Naive thymus-derived CD4-positive, alpha-beta T cell (primary cell): ENCODE measurements at regions of chr2 and their contacts with region 1.

Region 1: DNA sequence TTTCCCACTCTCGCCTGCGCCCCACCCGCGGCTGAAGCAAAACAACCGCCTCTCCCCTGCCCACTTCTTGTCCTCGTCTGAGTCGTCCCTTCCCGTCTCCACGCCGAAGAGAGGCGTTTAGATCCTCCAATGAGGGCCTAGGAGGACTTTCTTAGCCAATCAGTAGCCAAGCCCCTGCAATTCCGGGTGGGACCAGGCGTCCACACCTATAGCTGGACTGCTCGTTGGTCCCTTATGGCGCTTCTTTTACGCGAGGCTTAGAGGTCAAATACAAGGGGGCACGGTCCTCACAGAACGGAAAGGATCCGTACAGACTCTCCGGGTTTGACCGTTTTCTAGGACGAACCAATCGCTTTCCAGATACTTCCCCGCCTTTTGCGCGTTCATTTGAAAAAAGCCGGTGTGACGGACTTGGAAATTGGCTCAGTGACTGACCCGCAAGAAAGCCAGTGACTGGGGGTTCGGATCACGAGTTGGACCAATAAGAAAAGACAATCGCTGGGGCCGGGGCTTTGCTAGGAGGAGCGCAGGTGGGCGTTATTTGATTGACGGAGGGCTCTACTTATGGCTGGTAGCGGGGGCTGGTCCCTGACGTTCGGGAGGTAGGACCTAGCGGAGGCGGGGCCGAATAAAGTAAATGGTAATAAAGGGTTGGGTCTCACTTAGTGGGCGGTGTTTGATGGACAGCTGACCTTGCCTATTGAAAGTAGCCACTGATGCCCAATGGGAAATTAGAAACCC is 565 bp upstream of the PPM1B start:
- DNase-seq: peak; percentile 78 to 100 (median 99)
- ATAC-seq: peak; percentile 87
- H3K4me3 ChIP-seq: peak overlapping the region; percentile 80
- H3K4me3 Mint-ChIP-seq: peak overlapping the region; percentile 92 to 100 (median 96)
- H3K27ac ChIP-seq: peak overlapping the region; percentile 96
- H3K27ac Mint-ChIP-seq: peak overlapping the region; percentile 99 to 100 (median 100)
- H3K4me1 ChIP-seq: peaks cover 16 to 28% of the 10 kb centered on the region in 2 donors
- H3K4me1 Mint-ChIP-seq: peaks cover 29 to 38% (median 35%) of the 10 kb centered on the region in 7 donors
- H3K27me3 ChIP-seq: no peaks in the 10 kb centered on the region
- H3K27me3 Mint-ChIP-seq: no peaks in the 10 kb centered on the region

Region 2: DNA sequence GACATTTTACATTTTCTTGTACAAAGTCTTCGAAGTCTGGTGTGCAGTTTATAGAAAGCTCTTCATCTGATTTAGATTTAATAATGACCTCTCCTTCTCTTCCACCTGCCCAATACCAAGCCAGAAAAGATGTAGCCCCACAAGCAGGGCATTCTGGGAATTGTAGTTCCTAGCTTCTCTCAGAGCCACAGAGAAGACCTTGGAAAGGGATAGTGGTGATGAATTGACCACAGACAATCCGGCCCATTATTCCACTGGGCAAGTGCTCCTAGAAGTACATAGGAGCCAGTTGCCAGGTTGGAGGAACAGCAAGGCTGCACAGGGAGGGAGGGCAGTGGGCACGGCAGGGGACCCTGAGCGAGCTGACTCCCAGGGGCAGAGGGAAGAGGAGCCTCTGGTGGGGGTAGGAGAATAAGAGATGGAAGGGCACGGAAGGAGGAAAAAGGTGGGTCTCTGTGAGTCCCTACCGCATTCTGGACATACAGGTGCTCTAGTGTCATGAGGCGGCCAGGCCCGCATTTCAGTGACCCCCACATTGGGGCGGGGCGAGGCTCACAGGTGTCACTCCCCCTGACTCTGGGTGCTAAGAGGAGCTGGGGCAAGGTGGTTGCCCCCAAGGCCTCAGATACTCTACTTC is 1223.2 kb before region 1 on chr2:
- CTCF ChIA-PET with region 1: no interaction called
- POLR2A ChIA-PET with region 1: no interaction called
- intact Hi-C with region 1: no loop called
- DNase-seq: no peak
- ATAC-seq: no peak
- H3K4me3 ChIP-seq: no peak overlapping the region
- H3K4me3 Mint-ChIP-seq: no peak overlapping the region
- H3K27ac ChIP-seq: no peak overlapping the region
- H3K27ac Mint-ChIP-seq: no peak overlapping the region
- H3K4me1 ChIP-seq: no peaks in the 10 kb centered on the region
- H3K4me1 Mint-ChIP-seq: peaks cover 0 to 7% (median 5%) of the 10 kb centered on the region in 7 donors
- H3K27me3 ChIP-seq: no peaks in the 10 kb centered on the region
- H3K27me3 Mint-ChIP-seq: peaks cover 0 to 8% (median 0%) of the 10 kb centered on the region in 5 donors

Region 3: DNA sequence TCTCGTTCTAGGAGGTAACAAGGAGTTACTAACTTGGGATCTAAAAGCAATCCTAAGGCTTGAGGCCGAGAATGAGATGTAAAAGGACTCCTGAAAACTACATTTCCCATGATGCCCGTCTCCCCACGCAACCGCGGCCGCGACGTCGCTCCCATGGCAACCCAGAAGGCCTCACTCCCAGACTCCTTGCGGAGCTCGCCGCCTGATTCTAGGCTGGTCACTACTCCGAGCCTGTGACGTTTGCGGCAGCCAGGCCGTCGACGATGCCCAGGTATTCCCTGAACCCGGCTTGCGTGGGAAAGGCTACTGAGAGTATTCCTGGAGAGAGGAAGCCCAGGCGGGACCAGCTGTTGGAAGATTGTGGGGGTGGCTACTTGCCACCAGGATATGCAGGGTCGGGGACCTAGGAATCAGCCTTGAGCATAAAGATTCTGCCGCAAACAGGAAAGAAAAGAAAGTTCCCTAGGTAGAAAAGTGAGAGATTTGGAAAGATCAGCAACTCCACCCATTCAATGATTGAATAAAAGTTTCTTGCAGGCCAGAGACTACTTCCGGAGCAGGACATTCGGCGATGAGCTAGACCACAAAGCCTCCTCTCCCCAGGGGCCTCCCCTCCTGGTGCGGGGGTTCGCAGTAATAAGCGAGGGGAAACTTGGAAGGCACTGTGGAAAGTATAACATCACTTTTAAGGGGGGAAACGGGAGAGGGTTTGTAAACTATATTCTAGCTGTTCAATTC is 394.1 kb before region 1 on chr2 and contains the start of gene DYNC2LI1:
- CTCF ChIA-PET with region 1: no interaction called
- POLR2A ChIA-PET with region 1: no interaction called
- intact Hi-C with region 1: loop called (anchors 5 kb)
- DNase-seq: peak; percentile 44 to 81 (median 65)
- ATAC-seq: peak; percentile 97
- H3K4me3 ChIP-seq: peak within 1 kb of the TSS; percentile 75
- H3K4me3 Mint-ChIP-seq: peak within 1 kb of the TSS; percentile 92 to 99 (median 96)
- H3K27ac ChIP-seq: peak within 1 kb of the TSS; percentile 67
- H3K27ac Mint-ChIP-seq: peak within 1 kb of the TSS; percentile 35 to 93 (median 79)
- H3K4me1 ChIP-seq: no peaks in the 10 kb centered on the region
- H3K4me1 Mint-ChIP-seq: peaks cover 10 to 21% (median 13%) of the 10 kb centered on the region in 7 donors
- H3K27me3 ChIP-seq: no peaks in the 10 kb centered on the region
- H3K27me3 Mint-ChIP-seq: peaks cover 0 to 4% (median 0%) of the 10 kb centered on the region in 5 donors
- total RNA-seq, gene DYNC2LI1: 1.9 to 6.1 (median 5.1) TPM

Region 4: GRCh38 chr2:44087036-44087713 is 80.9 kb before region 1 on chr2:
- CTCF ChIA-PET with region 1: no interaction called
- POLR2A ChIA-PET with region 1: no interaction called
- intact Hi-C with region 1: loop called (anchors 1 kb)
- DNase-seq: peak; percentile 62 to 86 (median 77)
- ATAC-seq: peak; percentile 97
- H3K4me3 ChIP-seq: peak overlapping the region; percentile 68
- H3K4me3 Mint-ChIP-seq: peak overlapping the region; percentile 60 to 92 (median 86)
- H3K27ac ChIP-seq: peak overlapping the region; percentile 77
- H3K27ac Mint-ChIP-seq: peak overlapping the region; percentile 79 to 98 (median 91)
- H3K4me1 ChIP-seq: peaks cover 0 to 9% of the 10 kb centered on the region in 2 donors
- H3K4me1 Mint-ChIP-seq: peaks cover 4 to 30% (median 15%) of the 10 kb centered on the region in 7 donors
- H3K27me3 ChIP-seq: no peaks in the 10 kb centered on the region
- H3K27me3 Mint-ChIP-seq: no peaks in the 10 kb centered on the region

Region 5: GRCh38 chr2:44233450-44234128 is 65.5 kb after region 1 on chr2:
- CTCF ChIA-PET with region 1: interaction called, 3 read pairs
- POLR2A ChIA-PET with region 1: interaction called, 7 read pairs
- intact Hi-C with region 1: loop called (anchors 1 kb)
- DNase-seq: no peak
- ATAC-seq: no peak
- H3K4me3 ChIP-seq: no peak overlapping the region
- H3K4me3 Mint-ChIP-seq: no peak overlapping the region
- H3K27ac ChIP-seq: no peak overlapping the region
- H3K27ac Mint-ChIP-seq: peak overlapping the region in 4 of 9 donors; percentile 25 to 71 (median 48)
- H3K4me1 ChIP-seq: peaks cover 16 to 17% of the 10 kb centered on the region in 2 donors
- H3K4me1 Mint-ChIP-seq: peaks cover 6 to 46% (median 36%) of the 10 kb centered on the region in 7 donors
- H3K27me3 ChIP-seq: no peaks in the 10 kb centered on the region
- H3K27me3 Mint-ChIP-seq: no peaks in the 10 kb centered on the region

Region 6: GRCh38 chr2:44324971-44325426 is 156.9 kb after region 1 on chr2:
- CTCF ChIA-PET with region 1: no interaction called
- POLR2A ChIA-PET with region 1: no interaction called
- intact Hi-C with region 1: no loop called
- DNase-seq: no peak
- ATAC-seq: no peak
- H3K4me3 ChIP-seq: no peak overlapping the region
- H3K4me3 Mint-ChIP-seq: no peak overlapping the region
- H3K27ac ChIP-seq: no peak overlapping the region
- H3K27ac Mint-ChIP-seq: peak overlapping the region in 1 of 9 donors; percentile 24
- H3K4me1 ChIP-seq: no peaks in the 10 kb centered on the region
- H3K4me1 Mint-ChIP-seq: peaks cover 0 to 2% (median 0%) of the 10 kb centered on the region in 7 donors
- H3K27me3 ChIP-seq: no peaks in the 10 kb centered on the region
- H3K27me3 Mint-ChIP-seq: no peaks in the 10 kb centered on the region

Region 7: DNA sequence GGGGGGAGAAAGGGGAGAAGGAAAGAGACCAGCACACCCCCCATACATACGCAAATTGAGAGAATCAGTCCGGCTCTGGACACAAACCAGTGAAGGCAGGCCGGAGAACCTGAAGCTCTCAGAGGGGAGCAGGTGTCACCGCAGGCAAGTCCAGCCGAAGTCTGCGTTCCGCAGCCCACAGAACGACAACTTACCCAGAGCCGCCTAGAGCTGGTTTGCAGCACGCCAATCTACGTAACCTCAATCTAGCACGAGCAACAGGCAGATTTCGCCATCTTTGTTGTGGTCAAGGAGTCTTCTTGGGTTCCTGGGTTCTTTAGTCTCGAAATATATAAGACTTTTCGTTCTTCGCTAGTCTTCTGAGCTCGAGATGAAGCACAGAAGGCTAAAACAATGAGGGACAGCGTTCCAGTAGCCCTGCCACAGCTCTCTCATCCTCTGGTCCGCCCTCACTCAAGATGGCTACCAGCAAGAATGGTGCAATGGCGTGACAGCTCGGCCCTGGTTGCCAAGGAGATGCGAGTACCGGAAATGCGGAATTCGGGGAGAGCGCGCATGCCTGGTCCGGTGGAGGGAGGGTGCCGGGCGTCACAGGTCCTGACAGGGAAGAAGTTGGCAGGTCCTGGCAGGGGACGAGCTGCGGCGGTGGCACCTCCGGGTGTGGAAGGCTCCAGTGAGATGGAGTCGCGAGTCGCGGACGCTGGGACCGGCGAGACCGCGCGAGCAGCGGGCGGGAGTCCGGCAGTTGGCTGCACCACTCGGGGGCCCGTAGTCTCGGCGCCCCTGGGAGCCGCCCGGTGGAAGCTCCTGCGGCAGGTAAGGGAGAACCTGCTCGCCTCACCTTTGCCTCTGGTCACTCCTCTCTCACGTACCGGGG is 193.5 kb after region 1 on chr2 and contains the starts of genes CAMKMT and PREPL:
- CTCF ChIA-PET with region 1: no interaction called
- POLR2A ChIA-PET with region 1: interaction called, 55 read pairs
- intact Hi-C with region 1: loop called (anchors 1 kb)
- DNase-seq: peak; percentile 95 to 99 (median 99)
- ATAC-seq: peak; percentile 93
- H3K4me3 ChIP-seq: peak within 1 kb of the TSS; percentile 88
- H3K4me3 Mint-ChIP-seq: peak within 1 kb of the TSS; percentile 92 to 100 (median 98)
- H3K27ac ChIP-seq: peak within 1 kb of the TSS; percentile 99
- H3K27ac Mint-ChIP-seq: peak within 1 kb of the TSS; percentile 96 to 100 (median 99)
- H3K4me1 ChIP-seq: peaks cover 16 to 17% of the 10 kb centered on the region in 2 donors
- H3K4me1 Mint-ChIP-seq: peaks cover 22 to 81% (median 61%) of the 10 kb centered on the region in 7 donors
- H3K27me3 ChIP-seq: no peaks in the 10 kb centered on the region
- H3K27me3 Mint-ChIP-seq: peaks cover 0 to 3% (median 0%) of the 10 kb centered on the region in 5 donors
- total RNA-seq, gene CAMKMT: 11.1 to 20.8 (median 18.7) TPM
- total RNA-seq, gene PREPL: 22.0 to 41.9 (median 28.5) TPM

Region 8: DNA sequence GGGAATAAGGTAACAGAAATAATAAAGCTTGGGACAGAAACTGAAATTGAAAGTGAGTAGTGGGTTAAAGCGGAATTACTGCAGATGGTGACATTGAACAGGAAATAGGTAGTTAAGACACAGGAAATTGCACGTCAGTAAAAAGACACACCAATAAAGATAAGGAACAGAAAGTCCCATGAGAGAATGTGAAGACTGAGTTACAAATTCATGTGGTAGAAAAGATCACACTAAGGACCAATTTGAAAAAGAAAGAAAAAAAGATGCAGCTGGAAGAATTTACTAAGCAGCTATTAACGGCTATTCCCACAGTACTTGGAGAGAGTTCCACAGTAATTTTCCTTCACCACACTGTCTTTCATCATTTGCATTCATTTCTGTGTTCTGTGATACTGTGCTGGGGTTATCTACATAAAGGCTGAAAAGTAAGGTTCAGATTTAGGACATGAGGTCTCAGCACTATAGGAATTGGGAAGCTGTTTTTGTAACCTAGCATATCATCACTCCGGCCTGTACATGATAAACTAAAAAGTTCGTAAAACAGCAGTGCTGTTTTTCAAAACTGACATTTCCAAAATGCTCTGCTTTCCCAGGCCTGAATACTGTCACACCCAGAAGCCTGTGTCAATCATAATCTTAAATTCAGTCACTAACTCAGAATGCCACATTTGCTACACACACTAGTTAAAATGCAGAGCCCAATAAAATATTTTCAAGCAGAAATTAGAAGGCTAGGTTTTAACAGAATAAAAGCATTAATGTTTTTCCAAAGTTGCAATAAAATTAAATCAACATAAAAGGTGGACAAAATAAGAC is 1400.1 kb after region 1 on chr2:
- CTCF ChIA-PET with region 1: no interaction called
- POLR2A ChIA-PET with region 1: no interaction called
- intact Hi-C with region 1: loop called (anchors 2 to 5 kb)
- DNase-seq: peak in 7 of 9 donors; percentile 65 to 83 (median 80)
- ATAC-seq: peak; percentile 98
- H3K4me3 ChIP-seq: peak overlapping the region; percentile 54
- H3K4me3 Mint-ChIP-seq: peak overlapping the region; percentile 73 to 96 (median 88)
- H3K27ac ChIP-seq: peak overlapping the region; percentile 76
- H3K27ac Mint-ChIP-seq: peak overlapping the region; percentile 90 to 98 (median 94)
- H3K4me1 ChIP-seq: peaks cover 12 to 14% of the 10 kb centered on the region in 2 donors
- H3K4me1 Mint-ChIP-seq: peaks cover 15 to 49% (median 39%) of the 10 kb centered on the region in 7 donors
- H3K27me3 ChIP-seq: no peaks in the 10 kb centered on the region
- H3K27me3 Mint-ChIP-seq: no peaks in the 10 kb centered on the region